ENCODE measurements at regions of chr7 and their contacts with region 1.

Region 1: DNA sequence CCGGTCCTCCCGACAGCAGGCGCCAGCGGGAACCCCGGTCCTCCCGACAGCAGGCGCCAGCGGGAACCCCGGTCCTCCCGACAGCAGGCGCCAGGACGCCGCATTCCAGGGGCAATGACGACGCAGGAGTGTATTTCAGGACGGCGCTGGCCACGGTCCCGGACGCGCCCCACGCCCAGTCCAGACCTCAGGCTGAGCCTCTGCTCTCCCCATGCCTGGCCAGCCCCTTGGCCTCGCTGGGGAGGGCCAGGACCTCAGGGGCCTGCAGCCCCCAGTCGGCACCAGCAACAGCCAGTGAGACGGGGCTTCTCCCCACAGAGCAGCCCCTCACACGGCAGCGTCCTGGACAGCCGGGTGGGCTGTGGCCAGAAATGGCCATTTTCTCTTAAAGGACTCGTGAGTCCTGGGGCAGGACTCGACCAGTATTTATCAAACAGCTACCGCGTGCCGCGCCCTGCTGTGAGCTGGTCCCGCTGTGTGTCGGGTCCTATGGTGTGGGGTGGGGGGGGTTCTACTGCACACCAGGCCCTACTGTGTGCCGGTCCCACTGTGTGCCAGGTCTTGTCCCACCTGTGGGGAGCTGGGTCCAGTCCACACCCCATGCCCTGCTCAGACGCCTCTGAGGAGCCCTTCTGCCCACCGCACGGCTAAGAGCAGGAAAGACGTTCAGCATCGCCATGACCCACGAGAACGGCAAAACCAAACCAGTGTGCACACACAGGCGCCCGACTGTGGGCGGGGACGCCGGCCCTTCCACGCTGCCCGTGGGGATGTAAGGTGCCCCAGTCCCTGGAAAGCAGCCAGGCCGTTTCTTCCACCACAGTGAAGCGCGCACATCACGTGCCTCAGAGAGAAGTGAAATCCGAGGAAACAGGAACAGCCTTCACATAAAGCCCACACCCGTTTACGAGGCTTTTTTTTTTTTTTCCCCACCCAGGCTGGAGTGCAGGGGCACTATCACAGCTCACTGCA is 33.3 kb downstream of the GET4 start:
- DNase-seq: no peak
- H3K4me3 ChIP-seq: no peak overlapping the region
- H3K4me3 Mint-ChIP-seq: no peak overlapping the region
- H3K27ac Mint-ChIP-seq: no peak overlapping the region
- H3K4me1 ChIP-seq: no peaks in the 10 kb centered on the region
- H3K4me1 Mint-ChIP-seq: no peaks in the 10 kb centered on the region
- H3K27me3 ChIP-seq: no peaks in the 10 kb centered on the region
- H3K27me3 Mint-ChIP-seq: no peaks in the 10 kb centered on the region
- CTCF ChIP-seq: no peak

Region 2: DNA sequence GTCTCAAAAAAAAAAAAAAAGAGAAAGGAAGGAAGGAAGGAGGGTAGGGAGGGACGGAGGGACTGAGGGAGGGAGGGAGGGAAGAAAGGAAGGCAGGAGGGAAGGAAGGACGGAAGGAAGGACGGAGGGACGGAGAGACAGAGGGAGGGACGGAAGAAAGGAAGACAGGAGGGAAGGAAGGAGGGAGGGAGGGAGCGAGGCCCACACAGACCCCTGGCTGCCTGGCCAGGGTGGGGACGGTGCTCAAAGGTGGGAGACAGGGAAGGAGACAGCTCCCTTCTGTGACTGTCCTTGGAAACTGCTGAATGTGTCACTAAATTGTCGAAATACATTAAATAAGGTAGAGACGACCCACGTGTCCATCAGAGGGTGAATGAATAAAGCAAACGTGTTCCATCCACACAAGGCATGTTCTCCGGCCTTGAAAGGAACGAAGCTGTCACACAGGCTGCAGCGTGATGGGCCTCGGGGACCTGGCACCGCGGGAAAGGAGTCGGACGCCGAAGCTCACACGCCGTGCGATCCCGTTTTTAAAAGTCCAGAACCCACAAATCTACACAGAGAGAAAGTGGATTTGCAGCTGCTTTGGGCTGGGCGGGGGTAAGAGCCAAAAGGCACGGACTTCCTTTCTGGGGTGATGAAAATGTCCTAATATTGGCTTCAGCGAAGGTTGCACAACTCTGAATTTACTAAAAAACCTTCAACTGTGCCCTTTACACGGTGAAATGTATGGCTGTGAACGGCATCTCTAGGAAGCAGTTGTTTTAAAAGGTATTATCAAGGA is 21.5 kb after region 1 on chr7:
- CTCF ChIA-PET with region 1: no interaction called
- POLR2A ChIA-PET with region 1: no interaction called
- intact Hi-C with region 1: no loop called
- DNase-seq: peak in 1 of 2 experiments; percentile 12
- H3K4me3 ChIP-seq: no peak overlapping the region
- H3K4me3 Mint-ChIP-seq: no peak overlapping the region
- H3K27ac Mint-ChIP-seq: no peak overlapping the region
- H3K4me1 ChIP-seq: peaks cover 11% of the 10 kb centered on the region; the same call in 1 of the 2 replicates
- H3K4me1 Mint-ChIP-seq: peaks cover 8% of the 10 kb centered on the region
- H3K27me3 ChIP-seq: no peaks in the 10 kb centered on the region
- H3K27me3 Mint-ChIP-seq: no peaks in the 10 kb centered on the region
- CTCF ChIP-seq: no peak

Region 3: DNA sequence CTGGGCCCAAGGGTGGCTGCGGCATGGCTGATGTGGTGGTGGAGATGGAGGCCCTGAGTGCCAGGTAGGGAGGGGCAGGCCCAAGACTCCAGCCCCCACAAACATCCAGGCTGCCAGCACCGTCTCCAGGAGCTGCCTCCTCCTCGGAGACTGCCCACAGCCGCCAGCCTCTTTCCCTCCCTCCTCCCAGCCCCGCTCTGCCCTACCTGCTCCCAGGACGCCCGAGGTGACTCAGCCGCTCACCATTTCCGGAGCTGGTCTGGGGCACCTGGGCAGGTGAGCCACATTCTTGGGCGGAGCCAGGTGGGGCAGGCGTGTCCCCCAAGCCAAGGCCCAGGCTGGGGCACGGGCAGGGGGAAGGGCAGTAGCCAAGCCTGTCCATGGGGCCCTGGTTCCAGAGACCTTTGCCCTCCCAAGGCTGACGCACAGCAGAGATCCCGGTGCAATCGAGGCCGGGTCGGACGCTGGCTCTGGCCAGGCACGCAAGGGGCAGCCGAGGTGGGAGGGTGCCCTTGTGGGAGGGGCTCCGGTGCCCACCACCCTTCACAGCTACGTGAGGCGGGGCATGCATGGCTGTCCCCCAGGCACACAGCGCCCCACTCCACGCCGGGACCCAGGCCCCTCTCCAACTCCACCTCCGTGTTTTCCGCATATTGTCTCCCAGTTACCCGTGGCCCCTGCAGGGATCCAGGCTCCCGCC is 36.1 kb after region 1 on chr7:
- CTCF ChIA-PET with region 1: interaction called, 4 read pairs
- POLR2A ChIA-PET with region 1: no interaction called
- intact Hi-C with region 1: loop called (anchors 5 kb)
- DNase-seq: peak; percentile 99
- H3K4me3 ChIP-seq: peak overlapping the region; percentile 44
- H3K4me3 Mint-ChIP-seq: peak overlapping the region; percentile 54
- H3K27ac Mint-ChIP-seq: peak overlapping the region; percentile 82
- H3K4me1 ChIP-seq: peaks cover 33% of the 10 kb centered on the region
- H3K4me1 Mint-ChIP-seq: no peaks in the 10 kb centered on the region
- H3K27me3 ChIP-seq: no peaks in the 10 kb centered on the region
- H3K27me3 Mint-ChIP-seq: no peaks in the 10 kb centered on the region
- CTCF ChIP-seq: no peak

Region 4: DNA sequence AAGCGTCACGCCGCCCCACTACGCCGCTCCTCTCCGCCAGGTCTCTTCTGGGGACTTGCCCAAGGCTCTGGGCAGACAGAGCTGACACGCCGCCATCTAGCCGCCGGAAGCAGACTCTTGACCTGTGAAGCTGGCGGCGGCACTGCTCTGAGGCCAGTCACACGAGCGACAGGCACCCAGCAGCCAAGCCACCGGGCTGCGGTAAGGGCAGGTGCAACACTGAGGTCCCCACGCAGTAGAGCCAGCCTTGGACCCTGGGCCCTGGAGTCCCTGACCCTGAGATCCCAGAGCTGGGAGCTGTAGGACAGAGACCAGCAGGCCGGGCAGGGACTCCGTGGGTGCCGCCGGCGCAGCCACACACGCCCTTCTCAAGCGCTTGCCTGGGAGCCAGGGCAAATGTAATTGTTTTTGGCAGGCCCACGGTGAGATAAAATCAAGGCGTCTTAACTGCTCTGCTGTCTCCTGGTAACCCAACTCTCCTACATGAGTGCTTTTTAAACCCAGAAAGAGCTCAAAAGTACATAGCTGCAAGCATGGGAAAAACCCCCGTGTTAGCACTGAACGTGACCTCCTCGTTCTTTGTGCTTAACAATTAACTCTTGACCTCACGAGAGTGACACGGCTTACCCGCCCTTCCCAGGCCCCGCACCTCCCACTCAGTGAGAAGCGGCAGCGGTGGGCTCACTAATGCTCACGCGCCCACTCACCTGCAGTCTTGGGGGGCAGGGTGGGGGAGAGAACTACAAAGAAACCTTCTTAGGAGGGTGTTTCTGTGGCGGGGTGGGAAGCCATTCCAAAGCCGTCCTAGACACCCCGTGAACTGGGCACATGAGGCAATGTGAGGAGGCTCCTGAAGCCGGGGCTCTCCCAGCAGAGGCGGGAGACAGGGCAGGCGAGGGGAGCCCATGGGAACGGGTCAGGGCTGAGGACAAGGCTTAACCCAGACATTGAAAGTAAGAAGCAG is 186.8 kb after region 1 on chr7:
- CTCF ChIA-PET with region 1: no interaction called
- POLR2A ChIA-PET with region 1: no interaction called
- intact Hi-C with region 1: no loop called
- DNase-seq: no peak
- H3K4me3 ChIP-seq: no peak overlapping the region
- H3K4me3 Mint-ChIP-seq: no peak overlapping the region
- H3K27ac Mint-ChIP-seq: no peak overlapping the region
- H3K4me1 ChIP-seq: no peaks in the 10 kb centered on the region
- H3K4me1 Mint-ChIP-seq: no peaks in the 10 kb centered on the region
- H3K27me3 ChIP-seq: no peaks in the 10 kb centered on the region
- H3K27me3 Mint-ChIP-seq: no peaks in the 10 kb centered on the region
- CTCF ChIP-seq: no peak

Measured in Caco-2 (cell line).